Naive thymus-derived CD4-positive, alpha-beta T cell (primary cell): ENCODE measurements at regions of chr1 and their contacts with region 1.

Region 1: GRCh38 chr1:89274411-89274857 is 1.8 kb upstream of the GBP5 start:
- DNase-seq: peak in 2 of 9 donors; percentile 21 to 55
- ATAC-seq: peak; percentile 63
- H3K4me3 ChIP-seq: peak overlapping the region; percentile 40
- H3K4me3 Mint-ChIP-seq: peak overlapping the region; percentile 73 to 90 (median 80)
- H3K27ac ChIP-seq: peak overlapping the region; percentile 60
- H3K27ac Mint-ChIP-seq: peak overlapping the region; percentile 90 to 98 (median 95)
- H3K4me1 ChIP-seq: peaks cover 48 to 49% of the 10 kb centered on the region in 2 donors
- H3K4me1 Mint-ChIP-seq: peaks cover 44 to 92% (median 78%) of the 10 kb centered on the region in 7 donors
- H3K27me3 ChIP-seq: no peaks in the 10 kb centered on the region
- H3K27me3 Mint-ChIP-seq: no peaks in the 10 kb centered on the region

Region 2: GRCh38 chr1:88983791-88984559 is 290.5 kb before region 1 on chr1:
- CTCF ChIA-PET with region 1: interaction called, 9 read pairs
- POLR2A ChIA-PET with region 1: interaction called, 3 read pairs
- intact Hi-C with region 1: loop called in 1 of 2 experiments (anchors 1 kb)
- DNase-seq: peak in 7 of 9 donors; percentile 52 to 72 (median 62)
- ATAC-seq: peak; percentile 85
- H3K4me3 ChIP-seq: no peak overlapping the region
- H3K4me3 Mint-ChIP-seq: peak overlapping the region in 9 of 10 donors; percentile 56 to 76 (median 63)
- H3K27ac ChIP-seq: peak overlapping the region; percentile 55
- H3K27ac Mint-ChIP-seq: peak overlapping the region; percentile 46 to 94 (median 81)
- H3K4me1 ChIP-seq: peaks cover 5 to 13% of the 10 kb centered on the region in 2 donors
- H3K4me1 Mint-ChIP-seq: peaks cover 29 to 82% (median 70%) of the 10 kb centered on the region in 7 donors
- H3K27me3 ChIP-seq: no peaks in the 10 kb centered on the region
- H3K27me3 Mint-ChIP-seq: no peaks in the 10 kb centered on the region

Region 3: DNA sequence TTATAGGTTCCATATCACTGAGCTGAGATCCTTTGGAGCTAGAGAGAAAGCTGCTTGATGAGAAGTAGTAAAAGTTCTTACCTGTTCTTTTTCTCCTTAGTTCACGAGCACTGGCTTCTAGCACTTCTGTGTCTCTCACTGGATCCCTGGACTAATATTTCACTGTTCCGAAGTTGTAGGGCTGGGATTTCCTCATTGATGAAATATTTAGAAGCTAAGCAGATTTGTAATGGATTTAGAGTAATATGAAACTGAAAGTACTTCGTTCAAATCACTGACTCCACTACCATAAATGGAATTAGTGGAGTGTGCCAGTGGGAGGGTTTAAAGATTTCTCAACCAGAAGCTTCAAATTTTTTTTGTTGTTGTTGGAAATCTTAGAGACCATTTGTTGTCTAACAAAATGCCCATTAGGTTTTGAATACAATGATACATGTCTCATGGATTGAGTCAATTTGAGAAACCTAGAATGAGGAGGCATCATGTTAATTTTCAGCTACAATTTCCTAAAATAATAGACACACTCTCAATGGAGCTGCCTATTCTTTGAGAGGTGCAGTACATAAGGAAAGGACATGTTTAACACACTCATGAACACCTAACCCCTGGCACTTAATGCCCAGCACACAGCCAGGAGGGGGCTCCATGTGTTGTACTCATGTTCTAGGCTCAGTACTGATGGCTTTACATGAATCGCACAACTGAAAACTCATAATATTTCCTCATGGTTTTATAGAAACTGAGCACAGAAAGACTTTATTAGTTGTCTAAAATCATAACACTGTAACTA is 209.2 kb before region 1 on chr1 and contains the start of gene GBP1:
- CTCF ChIA-PET with region 1: interaction called, 4 read pairs
- POLR2A ChIA-PET with region 1: interaction called, 6 read pairs
- intact Hi-C with region 1: loop called (anchors 1 to 2 kb)
- DNase-seq: peak in 7 of 9 donors; percentile 34 to 56 (median 52)
- ATAC-seq: peak; percentile 88
- H3K4me3 ChIP-seq: peak within 1 kb of the TSS; percentile 56
- H3K4me3 Mint-ChIP-seq: peak within 1 kb of the TSS; percentile 89 to 97 (median 94)
- H3K27ac ChIP-seq: peak within 1 kb of the TSS; percentile 89
- H3K27ac Mint-ChIP-seq: peak within 1 kb of the TSS; percentile 90 to 98 (median 95)
- H3K4me1 ChIP-seq: peaks cover 15 to 26% of the 10 kb centered on the region in 2 donors
- H3K4me1 Mint-ChIP-seq: peaks cover 44 to 74% (median 62%) of the 10 kb centered on the region in 7 donors
- H3K27me3 ChIP-seq: no peaks in the 10 kb centered on the region
- H3K27me3 Mint-ChIP-seq: no peaks in the 10 kb centered on the region
- total RNA-seq, gene GBP1: 17.1 to 319 (median 51.9) TPM

Region 4: DNA sequence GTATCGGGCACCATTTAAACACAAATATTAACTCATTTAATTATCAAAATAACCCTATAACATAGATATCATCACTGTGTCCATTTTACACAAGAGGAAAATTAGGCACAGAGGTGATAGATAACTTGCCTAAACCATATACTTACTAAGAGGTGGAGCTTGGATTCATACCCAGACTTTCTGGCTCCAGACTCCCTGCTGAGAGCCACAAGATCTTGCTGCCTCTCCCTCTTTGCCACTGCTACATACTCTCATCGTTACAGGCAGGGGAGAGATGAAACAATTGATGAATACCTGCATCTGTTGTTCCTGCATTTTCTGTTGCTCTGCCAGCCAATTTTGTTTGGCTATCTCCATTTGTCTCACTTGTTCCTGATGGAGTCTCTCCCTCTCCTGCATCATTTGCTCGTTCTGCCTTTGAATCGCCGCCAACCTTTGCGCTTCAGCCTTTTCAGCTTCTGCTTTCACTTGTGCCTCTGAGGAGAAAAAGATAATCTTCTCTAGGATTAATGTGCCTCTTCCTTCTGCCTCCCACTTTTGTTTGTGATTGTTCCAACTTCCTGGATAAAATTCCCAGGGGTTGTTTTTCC is 12.4 kb before region 1 on chr1:
- CTCF ChIA-PET with region 1: interaction called, 3 read pairs
- POLR2A ChIA-PET with region 1: interaction called, 18 read pairs
- intact Hi-C with region 1: loop called (anchors 1 kb)
- DNase-seq: no peak
- ATAC-seq: no peak
- H3K4me3 ChIP-seq: peak overlapping the region; percentile 14
- H3K4me3 Mint-ChIP-seq: peak overlapping the region in 5 of 10 donors; percentile 12 to 91 (median 58)
- H3K27ac ChIP-seq: no peak overlapping the region
- H3K27ac Mint-ChIP-seq: peak overlapping the region in 8 of 9 donors; percentile 22 to 93 (median 56)
- H3K4me1 ChIP-seq: peaks cover 39 to 75% of the 10 kb centered on the region in 2 donors
- H3K4me1 Mint-ChIP-seq: peaks cover 49 to 76% (median 68%) of the 10 kb centered on the region in 7 donors
- H3K27me3 ChIP-seq: no peaks in the 10 kb centered on the region
- H3K27me3 Mint-ChIP-seq: no peaks in the 10 kb centered on the region

Region 5: DNA sequence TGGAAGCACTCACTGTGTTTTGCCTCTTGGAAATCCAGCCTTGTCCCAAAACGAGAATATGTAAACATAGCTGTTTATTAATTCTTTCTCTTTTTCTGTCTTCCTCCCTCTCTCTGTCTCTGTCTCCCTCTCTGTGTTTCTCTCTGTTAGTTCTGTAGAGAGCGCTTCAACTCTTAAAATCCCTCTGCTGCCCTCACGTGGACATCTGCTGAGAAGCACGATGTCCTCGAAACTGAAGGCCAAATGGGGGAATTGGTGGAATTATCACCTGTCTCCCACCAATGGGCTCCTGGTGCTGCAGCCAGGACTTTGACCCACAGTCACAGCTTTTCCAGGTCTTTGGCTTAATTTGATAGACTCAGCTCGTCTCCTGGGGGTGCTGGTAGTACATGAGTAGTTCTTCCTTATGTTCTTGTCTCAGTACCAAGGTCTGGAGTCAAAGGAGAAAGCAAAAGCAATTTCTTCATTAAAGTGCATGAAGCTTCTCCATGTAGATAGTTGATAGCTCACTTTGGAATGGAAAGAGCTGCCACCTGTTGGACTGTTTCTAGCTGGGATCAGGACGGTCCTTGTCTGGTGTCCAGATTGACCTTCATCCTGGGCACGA is 84.0 kb after region 1 on chr1:
- CTCF ChIA-PET with region 1: interaction called, 38 read pairs
- POLR2A ChIA-PET with region 1: interaction called, 3 read pairs
- intact Hi-C with region 1: loop called (anchors 1 to 2 kb)
- DNase-seq: peak; percentile 60 to 81 (median 75)
- ATAC-seq: peak; percentile 96
- H3K4me3 ChIP-seq: no peak overlapping the region
- H3K4me3 Mint-ChIP-seq: peak overlapping the region in 8 of 10 donors; percentile 1 to 82 (median 12)
- H3K27ac ChIP-seq: no peak overlapping the region
- H3K27ac Mint-ChIP-seq: peak overlapping the region in 6 of 9 donors; percentile 3 to 88 (median 46)
- H3K4me1 ChIP-seq: peaks cover 0 to 16% of the 10 kb centered on the region in 2 donors
- H3K4me1 Mint-ChIP-seq: peaks cover 5 to 61% (median 26%) of the 10 kb centered on the region in 7 donors
- H3K27me3 ChIP-seq: no peaks in the 10 kb centered on the region
- H3K27me3 Mint-ChIP-seq: peaks cover 0 to 8% (median 0%) of the 10 kb centered on the region in 5 donors

Region 6: DNA sequence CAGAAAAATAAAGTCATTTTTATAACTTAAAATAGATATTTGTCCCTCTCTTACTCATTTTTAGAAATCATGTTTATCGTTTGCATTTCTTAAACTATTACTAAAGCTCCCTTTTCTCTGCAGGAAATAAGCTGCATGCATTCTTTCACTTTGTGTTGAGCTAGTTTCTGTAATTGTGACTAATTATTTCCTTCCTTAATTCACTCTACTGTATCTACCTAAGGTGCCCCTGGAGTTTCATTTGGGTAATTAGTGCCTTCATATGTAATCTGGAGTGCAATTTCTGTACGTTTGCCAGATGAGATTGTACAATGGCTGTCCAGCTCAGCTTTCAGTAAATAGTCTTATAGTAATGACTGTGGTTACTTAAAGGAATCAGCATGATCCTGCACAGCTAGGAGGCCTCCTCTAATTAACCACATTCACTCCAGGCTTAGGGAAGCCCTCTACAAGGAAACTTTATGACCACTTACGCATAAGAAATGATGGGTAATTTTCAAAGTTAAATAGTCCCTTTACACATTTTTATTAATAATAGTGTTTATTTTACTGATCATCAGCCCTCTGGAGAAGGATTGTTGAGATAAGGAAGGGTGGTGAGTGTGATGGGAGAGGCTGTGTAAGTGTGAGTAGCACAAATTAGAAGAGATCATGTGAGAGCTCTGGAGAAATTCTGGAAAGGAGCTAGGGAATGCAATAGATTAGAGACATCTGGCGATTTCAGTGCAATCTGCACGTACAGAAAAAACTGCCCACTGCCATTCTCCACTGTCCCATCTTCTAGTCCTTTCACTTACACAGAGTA is 445.3 kb after region 1 on chr1:
- CTCF ChIA-PET with region 1: no interaction called
- POLR2A ChIA-PET with region 1: no interaction called
- intact Hi-C with region 1: loop called in 1 of 2 experiments (anchors 10 kb)
- DNase-seq: no peak
- ATAC-seq: peak; percentile 77
- H3K4me3 ChIP-seq: no peak overlapping the region
- H3K4me3 Mint-ChIP-seq: peak overlapping the region in 9 of 10 donors; percentile 1 to 82 (median 48)
- H3K27ac ChIP-seq: peak overlapping the region; percentile 10
- H3K27ac Mint-ChIP-seq: peak overlapping the region; percentile 1 to 97 (median 66)
- H3K4me1 ChIP-seq: peaks cover 27 to 57% of the 10 kb centered on the region in 2 donors
- H3K4me1 Mint-ChIP-seq: peaks cover 34 to 82% (median 75%) of the 10 kb centered on the region in 7 donors
- H3K27me3 ChIP-seq: no peaks in the 10 kb centered on the region
- H3K27me3 Mint-ChIP-seq: no peaks in the 10 kb centered on the region